OCI-LY7 (cell line): ENCODE measurements at regions of chr11 and their contacts with region 1.

Region 1: DNA sequence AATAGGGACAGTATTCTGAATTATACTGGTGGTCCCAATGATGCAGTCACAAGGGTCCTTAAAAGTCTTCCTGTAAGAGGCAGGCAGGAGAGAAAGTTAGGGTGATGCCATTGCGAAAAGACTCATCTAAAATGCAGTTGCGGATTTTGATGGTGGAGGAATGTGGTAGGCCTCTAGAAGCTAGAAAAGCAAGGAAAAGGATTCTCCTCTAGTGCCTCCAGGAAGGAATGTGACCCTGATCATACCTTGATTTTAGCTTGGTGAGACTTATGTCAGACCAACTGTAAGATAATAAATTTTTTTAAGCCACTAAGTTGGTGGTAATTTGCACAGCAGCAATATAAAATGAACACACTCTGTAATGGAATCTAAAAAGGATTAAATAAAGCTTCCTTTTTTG is 33.8 kb downstream of the CHORDC1 start:
- DNase-seq: no peak
- H3K4me3 ChIP-seq: no peak overlapping the region
- H3K27ac ChIP-seq: no peak overlapping the region
- H3K4me1 ChIP-seq: no peaks in the 10 kb centered on the region
- CTCF ChIP-seq: no peak

Region 2: DNA sequence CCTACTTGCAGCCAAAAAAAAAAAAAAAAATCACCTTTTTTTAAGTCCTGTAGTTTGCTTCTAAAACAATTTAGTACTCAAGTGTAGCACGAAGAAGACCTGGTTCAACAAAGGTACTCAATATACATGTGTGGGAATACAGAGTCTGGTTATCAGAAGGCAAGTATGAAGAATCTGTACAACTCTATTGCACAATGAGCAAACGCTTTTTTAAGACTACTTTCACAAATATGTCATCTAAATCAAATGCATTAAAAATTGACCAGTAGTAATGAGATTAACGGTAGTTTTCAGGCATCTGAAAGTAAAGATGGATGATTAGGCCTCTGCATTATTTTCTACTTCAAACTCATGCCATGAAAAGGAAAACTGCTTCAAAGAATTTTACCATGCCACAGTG is 24.3 kb after region 1 on chr11:
- CTCF ChIA-PET with region 1: no interaction called
- POLR2A ChIA-PET with region 1: interaction called, 11 read pairs
- intact Hi-C with region 1: no loop called
- DNase-seq: no peak
- H3K4me3 ChIP-seq: no peak overlapping the region
- H3K27ac ChIP-seq: no peak overlapping the region
- H3K4me1 ChIP-seq: peaks cover under 1% of the 10 kb centered on the region
- CTCF ChIP-seq: no peak